Right cardiac atrium (tissue), 5 donors: ENCODE measurements at regions of chr7 and their contacts with region 1.

Region 1: GRCh38 chr7:24979863-24980533 is at the start of gene OSBPL3:
- DNase-seq: peak; percentile 96 to 98 (median 97)
- ATAC-seq: peak; percentile 98
- H3K4me3 ChIP-seq: peak within 1 kb of the TSS; percentile 82
- H3K27ac ChIP-seq: peak within 1 kb of the TSS; percentile 90
- H3K4me1 ChIP-seq: peaks cover 3% of the 10 kb centered on the region
- H3K27me3 ChIP-seq: no peaks in the 10 kb centered on the region
- total RNA-seq, gene OSBPL3: 9.0 to 12.9 (median 10.4) TPM

Region 2: DNA sequence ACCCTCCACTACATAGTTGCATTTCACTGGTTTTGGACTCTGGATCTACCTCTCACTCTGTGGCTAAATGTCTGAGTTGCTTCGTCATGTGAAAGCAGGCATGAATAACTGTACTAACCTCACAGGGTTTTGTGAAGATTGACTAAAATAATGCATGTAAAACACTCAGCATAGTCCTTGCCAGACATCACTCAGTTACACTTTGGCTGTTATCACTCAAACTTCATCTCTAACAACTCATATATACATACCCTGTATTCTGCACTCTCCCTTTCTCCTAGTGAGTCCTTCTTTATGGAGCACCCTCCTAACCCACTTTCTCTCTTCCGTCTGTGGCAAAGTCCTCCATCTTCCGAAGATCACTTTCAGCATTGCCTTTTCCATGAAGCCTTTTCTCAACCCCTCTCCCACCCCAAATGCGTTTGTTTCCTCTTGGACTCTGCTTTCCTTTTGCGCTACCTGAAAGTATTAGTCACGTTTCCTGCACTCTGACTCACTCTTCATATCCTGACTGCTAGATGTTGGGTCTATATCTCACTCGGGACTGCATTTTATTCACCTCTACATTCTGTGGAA is 72.6 kb before region 1 on chr7:
- intact Hi-C with region 1: loop called in 1 of 4 experiments (anchors 10 kb)
- DNase-seq: no peak
- ATAC-seq: peak in 1 of 2 donors; percentile 35
- H3K4me3 ChIP-seq: no peak overlapping the region
- H3K27ac ChIP-seq: no peak overlapping the region
- H3K4me1 ChIP-seq: peaks cover 7% of the 10 kb centered on the region
- H3K27me3 ChIP-seq: no peaks in the 10 kb centered on the region

Region 3: GRCh38 chr7:25069900-25070443 is 90.0 kb after region 1 on chr7:
- intact Hi-C with region 1: loop called in 2 of 4 experiments (anchors 10 kb)
- DNase-seq: peak in 2 of 3 donors; percentile 37 to 54
- ATAC-seq: peak; percentile 67 to 84
- H3K4me3 ChIP-seq: no peak overlapping the region
- H3K27ac ChIP-seq: no peak overlapping the region
- H3K4me1 ChIP-seq: peaks cover 3% of the 10 kb centered on the region
- H3K27me3 ChIP-seq: no peaks in the 10 kb centered on the region